ENCODE measurements at regions of chr11 and their contacts with region 1.

Region 1: DNA sequence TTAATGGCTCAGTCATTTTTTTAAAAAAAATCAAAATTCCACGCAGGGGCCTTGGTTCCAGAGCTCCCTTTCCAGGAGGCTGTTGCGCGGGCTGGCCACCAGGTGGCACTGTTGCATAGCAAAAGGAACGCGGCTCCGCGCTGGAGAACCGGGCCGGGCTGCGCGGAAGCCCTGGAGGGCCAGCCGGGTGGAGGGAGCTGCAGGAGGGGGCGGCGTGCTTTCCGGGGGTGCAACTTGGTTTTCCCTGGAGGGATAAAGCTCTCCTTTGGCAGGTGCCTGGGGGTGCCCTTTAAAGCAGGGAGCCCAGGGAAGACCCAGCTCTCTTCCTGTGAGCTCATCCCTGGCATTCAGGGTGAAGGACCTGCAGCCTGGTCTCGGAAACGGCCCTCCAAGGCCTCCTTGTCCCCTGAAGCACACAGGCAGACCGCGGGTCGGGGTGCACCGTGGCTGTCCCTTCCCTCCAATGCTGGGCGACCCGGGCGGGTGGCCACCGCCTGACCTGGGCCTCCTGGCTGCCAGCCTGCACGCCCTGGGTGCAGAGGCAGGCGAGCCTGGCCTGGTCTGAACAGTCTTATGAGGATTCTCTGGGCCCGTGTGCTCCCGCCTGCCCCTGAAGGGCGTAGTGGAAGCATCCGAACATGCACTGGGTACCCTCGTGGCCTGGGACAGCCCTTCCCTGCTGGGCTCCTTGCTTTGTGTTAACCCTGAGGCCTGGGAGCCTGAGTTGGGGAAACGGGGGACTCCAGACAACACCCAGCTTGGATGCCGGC is 23.4 kb downstream of the KRTAP5-5 start:
- DNase-seq: peak; percentile 96
- H3K4me3 ChIP-seq: peak overlapping the region in 1 of 2 experiments; percentile 25; a peak in 2 of 4 replicates
- H3K27ac ChIP-seq: no peak overlapping the region
- H3K4me1 ChIP-seq: peaks cover 0 to 27% of the 10 kb centered on the region in 2 experiments; a peak in 1 of 4 replicates
- H3K27me3 ChIP-seq: no peaks in the 10 kb centered on the region
- CTCF ChIP-seq: peak; percentile 95
- EP300 ChIP-seq: no peak
- RAD21 ChIP-seq: peak; percentile 93

Region 2: DNA sequence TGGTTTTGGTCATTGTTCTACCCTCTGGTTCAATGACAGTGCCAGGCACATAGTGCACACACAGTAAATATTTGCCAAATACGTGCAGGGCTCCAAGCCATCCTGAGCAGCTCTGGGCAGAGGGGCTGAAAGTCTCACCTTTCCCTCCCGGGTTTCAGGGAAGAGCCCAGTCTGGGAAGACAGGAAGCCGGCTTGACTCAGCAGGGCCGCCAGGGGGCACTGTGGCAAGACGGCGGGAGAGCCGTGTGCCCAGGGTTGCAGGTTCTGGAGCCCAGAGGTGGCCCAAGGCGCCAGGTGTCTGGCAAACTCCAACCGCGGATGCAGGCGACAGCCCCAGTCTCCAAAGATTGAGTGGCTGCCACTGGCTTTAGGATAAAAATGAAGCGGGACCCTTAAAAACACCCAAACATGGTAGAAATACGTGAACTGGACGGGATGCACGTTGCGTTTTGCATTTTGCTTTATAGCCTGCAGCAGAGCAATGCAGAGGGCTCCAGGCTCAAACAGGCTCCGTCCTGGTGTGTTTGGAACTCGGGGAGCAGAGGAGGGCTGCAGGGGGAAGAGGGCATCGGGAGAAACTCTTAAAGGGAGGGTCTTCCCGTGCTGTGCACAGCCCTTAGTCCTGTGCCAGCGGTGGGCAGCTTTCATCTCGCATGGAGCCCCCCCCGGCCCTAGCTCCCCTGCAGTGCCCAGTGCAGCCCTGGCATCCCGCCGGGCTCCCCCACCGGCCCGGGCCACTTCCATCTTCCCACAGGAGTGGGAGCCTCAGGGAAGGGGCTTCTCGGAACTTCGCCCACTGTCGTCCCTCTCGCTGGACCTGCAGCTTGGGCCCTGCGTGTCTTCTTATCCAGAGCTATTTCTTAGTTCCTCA is 12.6 kb before region 1 on chr11:
- CTCF ChIA-PET with region 1: interaction called, 143 read pairs
- POLR2A ChIA-PET with region 1: interaction called, 7 read pairs
- DNase-seq: peak; percentile 86
- H3K4me3 ChIP-seq: no peak overlapping the region; a peak in 1 of 4 replicates
- H3K27ac ChIP-seq: no peak overlapping the region; a peak in 1 of 4 replicates
- H3K4me1 ChIP-seq: peaks cover 0 to 25% of the 10 kb centered on the region in 2 experiments; a peak in 1 of 4 replicates
- H3K27me3 ChIP-seq: no peaks in the 10 kb centered on the region
- CTCF ChIP-seq: peak; percentile 82
- EP300 ChIP-seq: no peak
- RAD21 ChIP-seq: peak; percentile 14; the same call in 1 of the 2 replicates

Region 3: GRCh38 chr11:1744137-1744886 is 91.4 kb after region 1 on chr11:
- CTCF ChIA-PET with region 1: interaction called, 13 read pairs
- POLR2A ChIA-PET with region 1: no interaction called
- DNase-seq: peak; percentile 63
- H3K4me3 ChIP-seq: no peak overlapping the region
- H3K27ac ChIP-seq: peak overlapping the region in 1 of 2 experiments; percentile 92; a peak in 2 of 4 replicates
- H3K4me1 ChIP-seq: peaks cover 0 to 52% of the 10 kb centered on the region in 2 experiments; a peak in 1 of 4 replicates
- H3K27me3 ChIP-seq: no peaks in the 10 kb centered on the region
- CTCF ChIP-seq: no peak
- EP300 ChIP-seq: no peak
- RAD21 ChIP-seq: no peak

Region 4: GRCh38 chr11:1837171-1838076 is 184.5 kb after region 1 on chr11:
- CTCF ChIA-PET with region 1: interaction called, 251 read pairs
- POLR2A ChIA-PET with region 1: no interaction called
- DNase-seq: peak; percentile 97
- H3K4me3 ChIP-seq: no peak overlapping the region
- H3K27ac ChIP-seq: peak overlapping the region in 1 of 2 experiments; percentile 60; a peak in 1 of 4 replicates
- H3K4me1 ChIP-seq: peaks cover 0 to 39% of the 10 kb centered on the region in 2 experiments; a peak in 1 of 4 replicates
- H3K27me3 ChIP-seq: no peaks in the 10 kb centered on the region
- CTCF ChIP-seq: peak; percentile 80
- EP300 ChIP-seq: no peak
- RAD21 ChIP-seq: peak; percentile 93

Region 5: GRCh38 chr11:1876361-1877063 is 223.6 kb after region 1 on chr11:
- CTCF ChIA-PET with region 1: interaction called, 21 read pairs
- POLR2A ChIA-PET with region 1: no interaction called
- DNase-seq: peak; percentile 86
- H3K4me3 ChIP-seq: no peak overlapping the region; a peak in 1 of 4 replicates
- H3K27ac ChIP-seq: peak overlapping the region; percentile 28 to 78; a peak in 2 of 4 replicates
- H3K4me1 ChIP-seq: peaks cover 0 to 46% of the 10 kb centered on the region in 2 experiments; a peak in 2 of 4 replicates
- H3K27me3 ChIP-seq: no peaks in the 10 kb centered on the region
- CTCF ChIP-seq: peak; percentile 51
- EP300 ChIP-seq: no peak; a peak in 1 of 4 replicates
- RAD21 ChIP-seq: no peak

Region 6: DNA sequence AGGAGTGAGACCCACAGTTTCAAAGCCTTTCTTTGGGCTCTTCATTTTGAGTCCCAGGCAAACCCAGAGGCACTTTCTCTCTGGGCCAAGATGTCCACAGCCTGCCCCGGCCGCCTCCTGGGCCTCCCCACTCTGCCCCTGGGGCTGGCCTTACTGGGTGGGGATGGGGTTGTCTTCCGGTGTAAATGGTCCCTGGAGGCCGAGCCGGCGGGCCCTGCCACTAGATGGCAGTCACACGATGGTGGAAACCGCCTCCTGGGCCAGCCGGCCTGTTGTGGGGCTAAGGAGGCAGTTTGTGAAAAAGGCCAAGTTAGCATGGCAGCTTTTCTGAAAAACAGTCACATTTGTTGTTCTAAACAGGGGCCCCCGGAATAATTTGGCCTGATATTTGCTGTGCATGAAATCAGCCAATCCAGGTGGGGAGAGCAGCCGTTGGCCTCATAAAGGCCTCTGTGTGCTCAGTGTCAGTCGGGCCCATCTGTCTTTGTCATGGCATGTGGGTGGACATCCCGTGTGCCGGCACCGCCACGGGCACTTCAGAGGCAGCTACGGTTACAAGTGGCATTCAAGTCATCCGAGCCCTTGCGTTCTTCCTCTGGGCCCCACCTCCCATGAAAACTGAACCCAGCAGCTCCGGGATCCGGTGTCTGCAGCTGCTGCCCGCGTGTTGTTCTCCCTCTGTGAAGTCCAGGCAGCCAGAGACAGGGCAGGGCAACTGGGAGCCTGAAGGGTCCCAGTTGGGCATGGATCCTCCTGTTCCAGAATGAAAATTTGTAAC is 300.7 kb after region 1 on chr11:
- CTCF ChIA-PET with region 1: interaction called, 16 read pairs
- POLR2A ChIA-PET with region 1: no interaction called
- DNase-seq: no peak
- H3K4me3 ChIP-seq: no peak overlapping the region
- H3K27ac ChIP-seq: peak overlapping the region in 1 of 2 experiments; percentile 47; a peak in 1 of 4 replicates
- H3K4me1 ChIP-seq: no peaks in the 10 kb centered on the region; a peak in 1 of 4 replicates
- H3K27me3 ChIP-seq: no peaks in the 10 kb centered on the region
- CTCF ChIP-seq: no peak
- EP300 ChIP-seq: no peak
- RAD21 ChIP-seq: no peak

Region 7: GRCh38 chr11:2160736-2161259 is 507.8 kb after region 1 on chr11 and contains the start of gene INS:
- CTCF ChIA-PET with region 1: interaction called, 277 read pairs
- POLR2A ChIA-PET with region 1: interaction called, 4 read pairs
- DNase-seq: no peak
- H3K4me3 ChIP-seq: no peak within 1 kb of the TSS
- H3K27ac ChIP-seq: no peak within 1 kb of the TSS
- H3K4me1 ChIP-seq: peaks cover 0 to 23% of the 10 kb centered on the region in 2 experiments; a peak in 1 of 4 replicates
- H3K27me3 ChIP-seq: no peaks in the 10 kb centered on the region
- CTCF ChIP-seq: no peak
- EP300 ChIP-seq: no peak
- RAD21 ChIP-seq: no peak
- polyA plus RNA-seq, gene INS: not detected in 2 replicates

Measured in SK-N-SH (cell line).